HCT116 (cell line): ENCODE measurements at regions of chr12 and their contacts with region 1.

Region 1: GRCh38 chr12:94710933-94711332 is 60.6 kb upstream of the TMCC3 start:
- DNase-seq: peak; percentile 43
- ATAC-seq: peak; percentile 100
- H3K4me3 ChIP-seq: no peak overlapping the region
- H3K27ac ChIP-seq: no peak overlapping the region
- H3K4me1 ChIP-seq: no peaks in the 10 kb centered on the region
- H3K27me3 ChIP-seq: no peaks in the 10 kb centered on the region; the same call in none of the 2 replicates
- CTCF ChIP-seq: peak; percentile 46 to 78 (median 70); a peak in 5 of 6 replicates
- POLR2A ChIP-seq: no peak
- RAD21 ChIP-seq: peak; percentile 69

Region 2: GRCh38 chr12:95336390-95337067 is 625.6 kb after region 1 on chr12:
- CTCF ChIA-PET with region 1: no interaction called
- POLR2A ChIA-PET with region 1: no interaction called
- RAD21 ChIA-PET with region 1: no interaction called
- intact Hi-C with region 1: loop called (anchors 1 kb)
- DNase-seq: peak; percentile 65
- ATAC-seq: peak; percentile 57
- H3K4me3 ChIP-seq: no peak overlapping the region
- H3K27ac ChIP-seq: no peak overlapping the region
- H3K4me1 ChIP-seq: peaks cover 16 to 59% of the 10 kb centered on the region in 2 experiments
- H3K27me3 ChIP-seq: no peaks in the 10 kb centered on the region
- CTCF ChIP-seq: peak; percentile 82 to 91 (median 83)
- POLR2A ChIP-seq: no peak
- RAD21 ChIP-seq: peak; percentile 97